CD4-positive, alpha-beta memory T cell (primary cell): ENCODE measurements at regions of chr19 and their contacts with region 1.

Region 1: GRCh38 chr19:6963937-6964336 is 57.3 kb downstream of the MBD3L2B start:
- DNase-seq: peak in 4 of 5 donors; percentile 15 to 40 (median 36)
- H3K4me3 ChIP-seq: no peak overlapping the region
- H3K4me3 Mint-ChIP-seq: no peak overlapping the region
- H3K27ac ChIP-seq: no peak overlapping the region
- H3K27ac Mint-ChIP-seq: no peak overlapping the region
- H3K4me1 ChIP-seq: no peaks in the 10 kb centered on the region
- H3K4me1 Mint-ChIP-seq: peaks cover 2 to 7% (median 6%) of the 10 kb centered on the region in 4 donors
- H3K27me3 ChIP-seq: no peaks in the 10 kb centered on the region
- H3K27me3 Mint-ChIP-seq: no peaks in the 10 kb centered on the region

Region 2: DNA sequence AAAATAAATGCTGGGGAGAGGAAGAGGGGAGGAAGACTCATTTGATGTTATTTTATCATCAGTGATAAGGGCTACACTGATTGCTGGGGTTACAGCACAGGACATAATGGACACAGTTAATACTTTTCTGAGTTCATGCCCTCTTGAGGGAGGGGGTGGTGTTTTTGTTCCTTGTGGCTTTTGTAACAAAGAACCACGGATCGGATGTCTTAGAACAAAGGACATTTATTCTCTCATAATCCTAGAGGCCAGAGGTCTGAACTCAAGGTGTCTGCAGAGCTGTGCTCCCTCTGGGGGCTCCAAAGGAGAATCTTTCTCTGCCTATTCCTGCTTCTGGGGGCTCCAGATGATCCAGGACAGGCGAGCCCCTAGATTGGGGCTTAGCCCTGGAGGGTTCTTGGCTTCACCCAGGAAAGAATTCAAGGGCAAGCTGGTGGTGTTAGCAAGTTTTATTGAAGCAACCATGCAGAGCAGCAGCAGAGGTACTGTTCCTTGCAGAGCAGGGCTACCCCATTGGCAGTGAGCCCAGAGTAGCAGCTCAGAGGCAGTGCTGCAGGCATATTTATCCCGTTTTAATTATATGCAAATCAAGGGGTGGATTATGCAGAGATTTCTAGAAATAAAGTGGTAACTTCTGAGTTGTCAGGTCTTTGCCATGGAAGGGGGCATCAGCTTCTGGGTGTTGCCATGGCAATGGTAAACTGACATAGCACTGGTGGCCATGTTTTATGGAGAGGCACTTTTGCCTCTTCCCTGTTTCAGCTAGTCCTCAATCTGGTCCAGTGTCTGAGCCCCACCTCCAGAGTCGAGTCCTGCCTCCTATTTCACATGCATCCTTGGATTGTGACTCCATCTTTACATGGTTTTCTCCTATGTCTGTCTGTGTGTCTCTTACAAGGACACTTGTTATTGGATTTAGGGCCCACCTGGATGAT is 173.5 kb before region 1 on chr19:
- CTCF ChIA-PET with region 1: no interaction called
- POLR2A ChIA-PET with region 1: no interaction called
- intact Hi-C with region 1: no loop called
- DNase-seq: no peak
- H3K4me3 ChIP-seq: no peak overlapping the region
- H3K4me3 Mint-ChIP-seq: peak overlapping the region in 5 of 8 donors; percentile 8 to 69 (median 49)
- H3K27ac ChIP-seq: no peak overlapping the region
- H3K27ac Mint-ChIP-seq: peak overlapping the region; percentile 68 to 88 (median 77)
- H3K4me1 ChIP-seq: peaks cover 50% of the 10 kb centered on the region
- H3K4me1 Mint-ChIP-seq: peaks cover 40 to 80% (median 56%) of the 10 kb centered on the region in 4 donors
- H3K27me3 ChIP-seq: no peaks in the 10 kb centered on the region
- H3K27me3 Mint-ChIP-seq: no peaks in the 10 kb centered on the region

Region 3: GRCh38 chr19:6947745-6948144 is 16.2 kb before region 1 on chr19:
- CTCF ChIA-PET with region 1: interaction called, 12 read pairs
- POLR2A ChIA-PET with region 1: no interaction called
- intact Hi-C with region 1: no loop called
- DNase-seq: no peak
- H3K4me3 ChIP-seq: no peak overlapping the region
- H3K4me3 Mint-ChIP-seq: peak overlapping the region in 4 of 8 donors; percentile 1 to 61 (median 38)
- H3K27ac ChIP-seq: no peak overlapping the region
- H3K27ac Mint-ChIP-seq: peak overlapping the region in 5 of 7 donors; percentile 3 to 92 (median 23)
- H3K4me1 ChIP-seq: peaks cover 9% of the 10 kb centered on the region
- H3K4me1 Mint-ChIP-seq: peaks cover 5 to 17% (median 13%) of the 10 kb centered on the region in 4 donors
- H3K27me3 ChIP-seq: no peaks in the 10 kb centered on the region
- H3K27me3 Mint-ChIP-seq: peaks cover 0 to 2% of the 10 kb centered on the region in 2 donors

Region 4: DNA sequence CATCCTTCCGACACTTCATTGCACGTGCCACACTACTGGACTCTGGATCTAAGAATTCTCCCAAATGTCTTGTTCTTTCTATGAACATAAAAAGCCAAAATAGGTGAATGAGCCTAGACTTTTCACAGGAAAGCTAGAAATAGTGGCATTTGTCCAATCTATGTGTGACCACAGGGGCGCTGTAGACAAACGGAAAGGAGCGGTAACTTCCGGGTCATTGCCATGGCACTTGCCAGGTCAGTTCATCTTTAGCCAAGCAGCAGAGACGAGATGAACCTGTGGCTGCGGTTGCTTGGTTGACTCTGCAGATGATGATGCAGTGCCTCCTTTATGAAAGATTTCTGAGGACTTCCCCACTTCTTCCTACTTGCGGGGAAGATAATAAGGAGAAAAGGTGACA is 11.0 kb before region 1 on chr19:
- CTCF ChIA-PET with region 1: interaction called, 12 read pairs
- POLR2A ChIA-PET with region 1: no interaction called
- intact Hi-C with region 1: no loop called
- DNase-seq: no peak
- H3K4me3 ChIP-seq: no peak overlapping the region
- H3K4me3 Mint-ChIP-seq: no peak overlapping the region
- H3K27ac ChIP-seq: no peak overlapping the region
- H3K27ac Mint-ChIP-seq: no peak overlapping the region
- H3K4me1 ChIP-seq: peaks cover under 1% of the 10 kb centered on the region
- H3K4me1 Mint-ChIP-seq: peaks cover 0 to 5% (median under 1%) of the 10 kb centered on the region in 4 donors
- H3K27me3 ChIP-seq: no peaks in the 10 kb centered on the region
- H3K27me3 Mint-ChIP-seq: peaks cover 0 to 3% of the 10 kb centered on the region in 2 donors

Region 5: DNA sequence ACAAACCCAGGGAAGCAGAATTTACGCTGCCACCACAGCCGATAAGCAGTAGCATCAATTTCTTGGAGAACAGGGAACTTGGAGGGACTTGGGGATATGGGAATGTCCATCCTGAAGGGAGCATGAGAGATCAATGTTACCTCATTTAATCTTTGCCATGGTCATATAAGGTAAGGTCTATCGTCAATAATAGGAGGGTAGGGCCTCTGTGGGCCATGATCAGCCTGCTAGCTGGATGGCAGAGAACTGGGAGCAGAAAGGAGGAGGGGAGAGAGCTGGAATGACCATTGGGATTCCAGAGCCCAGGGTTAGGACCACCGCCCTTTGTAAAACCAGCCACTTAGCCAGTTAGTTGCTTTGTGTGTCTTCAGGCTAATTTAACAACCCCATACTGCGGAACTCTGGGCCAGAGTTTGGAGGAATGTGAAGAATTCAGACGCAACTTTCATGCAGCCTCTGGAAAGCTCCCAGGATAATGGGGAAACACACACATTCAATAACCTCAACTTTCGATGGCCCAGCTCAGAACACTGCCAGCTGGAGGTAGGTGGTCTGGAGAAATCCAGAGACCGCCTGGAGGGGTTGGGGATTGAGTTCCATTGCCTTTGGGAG is 145.8 kb after region 1 on chr19:
- CTCF ChIA-PET with region 1: no interaction called
- POLR2A ChIA-PET with region 1: no interaction called
- intact Hi-C with region 1: no loop called
- DNase-seq: no peak
- H3K4me3 ChIP-seq: no peak overlapping the region
- H3K4me3 Mint-ChIP-seq: no peak overlapping the region
- H3K27ac ChIP-seq: no peak overlapping the region
- H3K27ac Mint-ChIP-seq: no peak overlapping the region
- H3K4me1 ChIP-seq: no peaks in the 10 kb centered on the region
- H3K4me1 Mint-ChIP-seq: no peaks in the 10 kb centered on the region
- H3K27me3 ChIP-seq: no peaks in the 10 kb centered on the region
- H3K27me3 Mint-ChIP-seq: peaks cover 3 to 6% of the 10 kb centered on the region in 2 donors